CD14-positive monocyte (primary cell): ENCODE measurements at regions of chr21 and their contacts with region 1.

Region 1: GRCh38 chr21:45655124-45655523 is 11.6 kb downstream of the PCBP3 start:
- DNase-seq: no peak
- H3K4me3 ChIP-seq: no peak overlapping the region
- H3K4me3 Mint-ChIP-seq: no peak overlapping the region
- H3K27ac ChIP-seq: no peak overlapping the region
- H3K27ac Mint-ChIP-seq: no peak overlapping the region
- H3K4me1 ChIP-seq: no peaks in the 10 kb centered on the region
- H3K4me1 Mint-ChIP-seq: no peaks in the 10 kb centered on the region
- H3K27me3 ChIP-seq: no peaks in the 10 kb centered on the region
- H3K27me3 Mint-ChIP-seq: peaks cover 0 to 3% (median 2%) of the 10 kb centered on the region in 3 donors
- CTCF ChIP-seq: no peak

Region 2: DNA sequence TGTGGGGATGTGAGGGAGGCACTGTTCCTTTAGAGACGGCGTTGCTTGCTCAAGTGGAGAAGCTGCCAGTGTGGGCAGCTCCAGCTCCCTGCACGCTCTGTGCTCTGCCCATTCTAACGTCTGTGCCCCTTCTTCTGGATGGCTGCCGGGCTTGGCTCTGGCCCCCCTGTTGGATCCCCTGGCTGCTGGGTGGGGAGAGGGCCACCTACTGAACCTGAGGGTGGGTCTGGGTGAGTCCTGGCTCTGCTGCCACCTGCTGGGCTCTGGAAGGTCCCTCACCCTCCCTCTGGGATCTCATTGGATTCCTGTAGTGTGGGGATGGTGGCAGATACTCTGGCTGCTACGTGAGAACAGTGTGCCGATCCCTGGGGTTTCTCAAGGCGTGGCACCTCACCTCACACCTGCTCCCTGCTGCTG is 1350.2 kb before region 1 on chr21:
- intact Hi-C with region 1: no loop called
- DNase-seq: peak; percentile 20 to 41 (median 39)
- H3K4me3 ChIP-seq: no peak overlapping the region
- H3K4me3 Mint-ChIP-seq: no peak overlapping the region
- H3K27ac ChIP-seq: no peak overlapping the region
- H3K27ac Mint-ChIP-seq: peak overlapping the region in 3 of 7 donors; percentile 41 to 84 (median 83)
- H3K4me1 ChIP-seq: peaks cover 19 to 24% of the 10 kb centered on the region in 2 donors
- H3K4me1 Mint-ChIP-seq: peaks cover 34% of the 10 kb centered on the region
- H3K27me3 ChIP-seq: no peaks in the 10 kb centered on the region
- H3K27me3 Mint-ChIP-seq: peaks cover 0 to 3% (median 0%) of the 10 kb centered on the region in 3 donors
- CTCF ChIP-seq: peak; percentile 72

Region 3: DNA sequence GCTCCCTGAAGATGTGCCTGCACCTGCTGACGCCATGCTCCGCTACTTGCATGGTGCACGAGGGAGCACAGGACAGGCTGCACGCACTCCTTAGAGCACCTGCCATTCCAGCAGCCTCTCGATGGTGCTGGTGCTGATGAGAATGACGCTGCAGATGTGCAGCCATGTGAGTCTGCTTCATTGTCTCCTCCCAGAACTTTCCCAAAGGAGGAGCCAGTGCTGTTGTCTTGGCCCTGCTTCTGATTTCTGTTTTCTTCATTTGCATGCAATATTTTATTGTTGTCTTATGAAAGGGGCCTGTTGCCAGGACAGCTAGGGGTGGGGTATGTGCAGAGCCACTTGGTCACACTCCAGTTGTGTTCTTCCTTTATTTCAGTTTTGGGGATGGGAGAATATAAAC is 58.5 kb after region 1 on chr21:
- intact Hi-C with region 1: loop called in 1 of 2 experiments (anchors 10 kb)
- DNase-seq: no peak
- H3K4me3 ChIP-seq: no peak overlapping the region
- H3K4me3 Mint-ChIP-seq: no peak overlapping the region
- H3K27ac ChIP-seq: no peak overlapping the region
- H3K27ac Mint-ChIP-seq: no peak overlapping the region
- H3K4me1 ChIP-seq: peaks cover 4 to 5% of the 10 kb centered on the region in 2 donors
- H3K4me1 Mint-ChIP-seq: peaks cover 11% of the 10 kb centered on the region
- H3K27me3 ChIP-seq: no peaks in the 10 kb centered on the region
- H3K27me3 Mint-ChIP-seq: no peaks in the 10 kb centered on the region
- CTCF ChIP-seq: no peak

Region 4: GRCh38 chr21:45800339-45801080 is 145.4 kb after region 1 on chr21:
- intact Hi-C with region 1: loop called in 1 of 2 experiments (anchors 10 kb)
- DNase-seq: no peak
- H3K4me3 ChIP-seq: no peak overlapping the region
- H3K4me3 Mint-ChIP-seq: no peak overlapping the region
- H3K27ac ChIP-seq: no peak overlapping the region
- H3K27ac Mint-ChIP-seq: no peak overlapping the region
- H3K4me1 ChIP-seq: no peaks in the 10 kb centered on the region
- H3K4me1 Mint-ChIP-seq: no peaks in the 10 kb centered on the region
- H3K27me3 ChIP-seq: no peaks in the 10 kb centered on the region
- H3K27me3 Mint-ChIP-seq: peaks cover 0 to 1% (median 0%) of the 10 kb centered on the region in 3 donors
- CTCF ChIP-seq: no peak

Region 5: GRCh38 chr21:46540087-46540710 is 885.1 kb after region 1 on chr21:
- intact Hi-C with region 1: no loop called
- DNase-seq: no peak
- H3K4me3 ChIP-seq: no peak overlapping the region
- H3K4me3 Mint-ChIP-seq: no peak overlapping the region
- H3K27ac ChIP-seq: no peak overlapping the region
- H3K27ac Mint-ChIP-seq: peak overlapping the region in 2 of 7 donors; percentile 15 to 68
- H3K4me1 ChIP-seq: no peaks in the 10 kb centered on the region
- H3K4me1 Mint-ChIP-seq: no peaks in the 10 kb centered on the region
- H3K27me3 ChIP-seq: no peaks in the 10 kb centered on the region
- H3K27me3 Mint-ChIP-seq: peaks cover 0 to 2% (median 0%) of the 10 kb centered on the region in 3 donors
- CTCF ChIP-seq: no peak